ENCODE measurements at regions of chr14 and their contacts with region 1.

Region 1: GRCh38 chr14:75188520-75189268 is 12.3 kb upstream of the TMED10 start:
- DNase-seq: no peak
- H3K4me3 ChIP-seq: no peak overlapping the region
- H3K27ac ChIP-seq: peak overlapping the region in 1 of 4 donors; percentile 33
- H3K4me1 ChIP-seq: peaks cover 0 to 4% (median 2%) of the 10 kb centered on the region in 4 donors
- H3K27me3 ChIP-seq: no peaks in the 10 kb centered on the region
- CTCF ChIP-seq: no peak
- EP300 ChIP-seq: no peak
- POLR2A ChIP-seq: no peak

Region 2: GRCh38 chr14:75230140-75231045 is 41.7 kb after region 1 on chr14:
- intact Hi-C with region 1: loop called (anchors 5 kb)
- DNase-seq: no peak
- H3K4me3 ChIP-seq: no peak overlapping the region
- H3K27ac ChIP-seq: no peak overlapping the region
- H3K4me1 ChIP-seq: peaks cover 0 to 19% (median 7%) of the 10 kb centered on the region in 4 donors
- H3K27me3 ChIP-seq: no peaks in the 10 kb centered on the region
- CTCF ChIP-seq: peak in 1 of 3 experiments; percentile 20
- EP300 ChIP-seq: no peak
- POLR2A ChIP-seq: no peak

Measured in esophagus muscularis mucosa (tissue), 4 donors.